ENCODE measurements at regions of chr4 and their contacts with region 1.

Region 1: DNA sequence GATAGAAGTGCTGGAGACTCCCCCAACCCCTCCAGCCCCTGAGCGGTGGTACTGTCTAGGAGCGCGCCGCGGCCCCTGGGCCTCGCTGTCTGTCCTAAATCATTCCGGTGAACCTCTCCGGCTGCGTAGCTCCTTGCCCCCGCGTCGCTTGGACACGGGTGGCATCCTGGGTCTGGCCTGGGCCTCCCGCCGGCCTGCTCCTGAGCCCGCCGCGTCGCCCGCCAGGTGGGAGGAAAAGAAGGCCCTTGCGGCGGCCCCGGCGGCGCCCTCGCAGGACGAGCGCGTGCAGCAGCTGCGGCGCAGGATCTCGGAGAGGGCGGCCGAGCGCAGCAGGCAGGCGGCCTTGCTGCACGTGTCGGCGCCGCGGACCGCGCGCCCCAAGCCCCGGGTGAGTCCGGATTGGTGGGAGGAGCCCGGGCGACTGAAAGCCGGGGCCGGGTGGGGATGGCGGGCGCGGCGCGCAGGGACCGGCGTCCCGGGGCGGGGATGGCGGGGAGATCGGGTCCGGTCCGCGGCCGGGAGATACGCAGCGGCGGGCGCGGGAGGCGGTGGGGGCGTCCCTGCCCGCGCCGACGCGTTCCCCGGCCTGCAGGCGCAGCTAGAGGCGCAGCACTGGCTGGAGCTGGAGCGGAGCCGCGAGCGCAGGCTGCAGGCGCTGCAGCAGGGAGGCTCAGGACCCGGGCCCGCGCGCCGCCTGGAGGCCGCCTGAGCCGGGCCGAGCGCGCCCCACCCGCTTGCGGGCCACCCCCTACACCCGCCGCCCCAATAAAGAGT is 6.5 kb upstream of the RNF4 start:
- DNase-seq: peak; percentile 41 to 96 (median 67)

Region 2: GRCh38 chr4:1819284-1819683 is 643.1 kb before region 1 on chr4:
- intact Hi-C with region 1: no loop called
- DNase-seq: peak in 1 of 10 donors; percentile 52

Region 3: GRCh38 chr4:2220016-2220630 is 242.3 kb before region 1 on chr4:
- intact Hi-C with region 1: loop called (anchors 2 kb)
- DNase-seq: peak; percentile 44 to 95 (median 72)